ENCODE measurements at regions of chr15 and their contacts with region 1.

Region 1: DNA sequence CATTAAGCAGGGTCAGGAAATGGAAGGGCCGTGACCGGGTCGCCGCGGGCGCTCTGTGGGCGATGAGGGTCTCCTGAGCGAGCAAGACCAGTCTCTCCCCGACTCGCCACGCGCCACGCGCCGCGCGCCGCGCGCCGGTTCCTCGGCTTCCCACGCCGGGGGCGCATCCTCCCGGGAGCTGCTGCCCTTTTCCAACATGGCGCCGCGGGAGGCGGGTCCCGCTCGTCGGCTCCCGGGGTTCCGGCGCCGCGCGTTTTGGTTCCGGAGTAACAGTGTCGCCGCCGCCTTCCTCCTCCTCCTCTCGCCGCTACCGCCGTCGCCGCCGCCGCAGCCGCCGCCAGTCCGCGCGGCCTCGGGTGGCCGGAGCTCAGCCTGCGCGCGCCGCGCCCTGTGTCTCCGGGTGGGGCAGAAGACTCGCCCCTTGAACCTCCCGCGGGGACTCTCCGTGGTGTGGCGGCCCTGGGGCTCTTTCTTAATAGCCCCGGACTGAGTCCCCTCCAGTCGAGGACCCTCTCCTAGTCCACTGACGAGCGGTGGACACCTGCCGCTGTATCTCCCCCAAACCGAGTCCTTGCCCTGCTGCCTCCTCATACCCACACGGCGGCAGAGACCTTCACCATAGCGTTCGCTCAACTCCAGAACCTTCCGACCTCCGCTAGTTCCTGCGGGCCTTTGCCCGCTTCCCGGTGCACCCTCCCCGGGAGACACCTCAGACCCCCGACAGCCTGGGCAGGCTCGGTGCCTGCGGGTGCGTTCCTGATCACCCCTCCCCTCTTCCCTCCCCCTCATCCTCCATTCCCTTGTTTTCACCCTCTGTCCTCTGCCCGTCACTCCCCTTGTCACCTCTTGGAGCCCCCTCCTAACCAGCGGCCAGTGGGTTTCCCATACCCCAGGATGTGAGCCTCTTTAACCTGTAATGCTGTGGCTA is at the start of gene MAP2K5:
- H3K4me3 ChIP-seq: peak within 1 kb of the TSS; percentile 89
- H3K27ac ChIP-seq: peak within 1 kb of the TSS; percentile 88
- H3K4me1 ChIP-seq: peaks cover 8% of the 10 kb centered on the region; the same call in 1 of the 2 replicates
- CTCF ChIP-seq: no peak

Region 2: DNA sequence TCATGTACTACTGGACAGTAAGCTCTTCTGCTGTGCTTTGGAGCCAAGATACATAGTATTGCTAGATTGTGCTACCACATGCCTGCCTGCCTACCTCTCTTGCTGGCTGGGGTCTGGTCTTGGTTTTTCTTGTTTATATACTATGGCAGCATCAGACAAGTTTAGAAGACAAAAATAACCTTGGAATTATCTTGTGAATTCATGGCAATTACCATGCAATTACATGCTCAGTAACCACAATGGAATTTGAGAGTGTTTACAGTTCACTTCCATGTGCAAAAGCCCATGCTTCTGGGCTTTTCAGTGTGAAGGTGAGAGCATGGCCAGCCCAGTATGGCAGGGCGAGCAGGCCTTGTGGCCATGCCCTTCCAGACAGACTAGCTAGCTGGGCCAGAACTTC is 69.7 kb before region 1 on chr15:
- CTCF ChIA-PET with region 1: no interaction called
- POLR2A ChIA-PET with region 1: no interaction called
- H3K4me3 ChIP-seq: no peak overlapping the region
- H3K27ac ChIP-seq: no peak overlapping the region
- H3K4me1 ChIP-seq: no peaks in the 10 kb centered on the region
- CTCF ChIP-seq: no peak

Region 3: DNA sequence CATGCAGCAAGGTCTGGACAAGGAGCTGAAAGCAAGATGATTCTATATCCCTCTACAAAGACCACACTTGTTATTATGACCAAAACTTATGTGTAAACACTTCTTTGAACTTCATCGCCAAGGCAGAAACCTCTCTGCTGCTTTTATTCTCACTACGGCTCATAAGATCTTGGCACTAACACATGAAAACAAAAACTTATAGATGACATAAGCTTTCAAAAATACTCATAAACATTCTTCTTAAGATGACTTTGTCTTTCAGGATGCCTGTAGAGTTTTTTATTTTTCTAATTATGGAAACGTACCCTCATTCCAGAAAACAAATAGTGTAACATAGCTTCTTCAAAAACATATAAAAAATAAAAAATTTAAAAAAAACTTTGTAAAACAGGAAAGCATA is 34.3 kb before region 1 on chr15:
- CTCF ChIA-PET with region 1: no interaction called
- POLR2A ChIA-PET with region 1: no interaction called
- H3K4me3 ChIP-seq: no peak overlapping the region
- H3K27ac ChIP-seq: no peak overlapping the region
- H3K4me1 ChIP-seq: peaks cover 10% of the 10 kb centered on the region
- CTCF ChIP-seq: no peak

Region 4: GRCh38 chr15:67521029-67521811 is 21.5 kb before region 1 on chr15 and contains the start of gene C15orf61:
- CTCF ChIA-PET with region 1: no interaction called
- POLR2A ChIA-PET with region 1: interaction called, 15 read pairs
- H3K4me3 ChIP-seq: peak within 1 kb of the TSS; percentile 61
- H3K27ac ChIP-seq: peak within 1 kb of the TSS; percentile 100
- H3K4me1 ChIP-seq: peaks cover 17% of the 10 kb centered on the region
- CTCF ChIP-seq: peak; percentile 98

Region 5: DNA sequence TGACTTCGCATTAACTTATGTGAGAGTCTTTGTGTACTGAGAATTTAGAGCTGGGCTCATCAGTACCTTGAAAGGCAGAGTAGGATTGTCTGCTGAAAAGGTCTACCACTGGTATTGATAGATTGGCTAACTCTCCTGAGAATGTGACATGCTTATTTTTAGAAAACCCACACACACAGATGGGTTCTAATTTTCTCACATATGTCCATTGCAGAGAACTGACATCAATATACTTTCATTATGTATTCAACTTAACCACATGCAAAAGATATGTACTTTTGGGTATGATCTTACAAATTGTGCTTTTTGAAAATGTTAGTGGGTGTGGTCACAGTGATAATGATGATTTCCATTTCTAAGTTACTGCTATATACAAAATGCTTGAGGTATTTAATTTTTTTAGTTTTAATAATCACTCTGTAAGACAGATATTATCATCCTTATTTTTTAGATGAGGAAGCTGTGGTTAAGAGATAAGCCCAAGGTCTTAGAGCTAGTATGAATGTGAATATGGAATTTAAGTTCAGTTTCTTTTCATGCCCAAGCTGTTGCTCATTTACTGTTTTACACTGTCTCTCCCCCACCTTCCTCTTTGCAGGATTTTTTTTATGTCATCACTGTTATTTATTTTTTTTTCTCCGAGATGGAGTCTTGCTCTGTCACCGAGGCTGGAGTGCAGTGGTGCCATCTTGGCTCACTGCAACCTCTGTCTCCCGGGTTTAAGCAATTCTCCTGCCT is 22.1 kb after region 1 on chr15:
- CTCF ChIA-PET with region 1: no interaction called
- POLR2A ChIA-PET with region 1: no interaction called
- H3K4me3 ChIP-seq: no peak overlapping the region
- H3K27ac ChIP-seq: no peak overlapping the region
- H3K4me1 ChIP-seq: peaks cover 25% of the 10 kb centered on the region
- CTCF ChIP-seq: no peak

Region 6: DNA sequence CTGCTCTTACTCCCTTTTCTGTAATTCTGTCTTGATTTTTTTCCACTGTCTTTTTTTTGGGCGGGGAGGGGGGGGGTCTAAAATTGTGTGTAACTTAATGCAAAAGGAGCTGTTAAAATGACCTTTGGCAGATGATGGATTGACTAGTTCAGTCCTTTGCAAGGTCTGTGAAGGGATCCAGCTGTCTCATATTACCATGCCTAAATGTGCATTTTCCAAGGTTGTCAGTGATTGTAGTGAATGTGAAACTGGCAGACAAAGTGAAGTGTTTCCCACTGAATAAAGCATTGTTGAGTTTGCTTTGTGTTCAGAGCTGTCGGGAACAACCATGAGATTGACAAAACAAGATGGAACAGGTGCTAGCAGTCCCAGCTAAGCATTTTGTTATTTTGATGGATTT is 172.5 kb after region 1 on chr15:
- CTCF ChIA-PET with region 1: no interaction called
- POLR2A ChIA-PET with region 1: no interaction called
- H3K4me3 ChIP-seq: no peak overlapping the region
- H3K27ac ChIP-seq: no peak overlapping the region; the same call in 1 of the 2 replicates
- H3K4me1 ChIP-seq: peaks cover 36% of the 10 kb centered on the region
- CTCF ChIP-seq: no peak